ENCODE measurements at regions of chr15 and their contacts with region 1.

Region 1: DNA sequence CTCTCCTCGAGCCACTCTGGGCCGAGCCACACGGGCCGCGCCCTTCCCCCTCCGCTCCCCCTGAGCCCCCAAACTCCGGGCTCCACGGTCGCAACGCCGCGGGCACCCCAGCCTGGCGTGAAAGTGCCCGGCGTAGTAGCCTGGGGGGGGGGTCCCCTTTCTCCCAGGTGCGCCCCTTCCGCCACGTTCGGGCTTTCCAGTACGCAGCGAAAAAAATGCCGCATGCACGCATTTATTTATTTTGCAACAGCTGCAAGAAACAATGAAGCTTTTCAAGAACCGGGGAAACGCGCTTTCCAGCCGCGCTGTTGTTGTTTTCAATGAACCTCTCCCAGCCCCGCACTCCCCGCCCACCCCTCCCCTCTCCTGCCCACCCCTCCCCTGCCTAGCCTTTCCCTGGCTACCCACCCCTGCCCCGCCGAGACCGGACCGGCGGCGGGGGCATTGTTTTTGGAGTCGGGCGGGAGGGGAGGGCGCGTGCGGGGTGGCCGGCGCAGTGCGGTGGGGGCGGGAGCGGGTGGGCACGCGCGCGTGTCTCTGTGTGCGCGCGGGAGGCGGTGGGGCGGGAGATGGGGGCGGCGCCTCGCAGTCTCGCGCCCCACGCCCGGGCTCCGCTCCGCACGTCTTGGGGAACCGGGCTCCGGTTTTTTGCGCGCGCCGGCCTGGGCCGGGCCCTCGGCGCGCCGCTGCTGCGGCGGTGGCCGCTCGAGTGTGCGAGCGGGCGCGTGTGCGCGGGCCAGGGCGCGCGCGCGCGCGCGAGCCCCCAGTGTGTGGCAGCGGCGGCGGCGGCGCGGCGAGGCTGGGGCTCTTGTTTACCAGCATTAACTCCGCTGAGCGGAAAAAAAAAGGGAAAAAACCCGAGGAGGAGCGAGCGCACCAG is at the start of gene IGF1R:
- DNase-seq: peak; percentile 94
- ATAC-seq: peak; percentile 80
- H3K4me3 ChIP-seq: peak within 1 kb of the TSS; percentile 42 to 81 (median 78)
- H3K4me3 Mint-ChIP-seq: peak within 1 kb of the TSS; percentile 87
- H3K27ac ChIP-seq: peak within 1 kb of the TSS; percentile 49
- H3K27ac Mint-ChIP-seq: peak within 1 kb of the TSS; percentile 92
- H3K4me1 ChIP-seq: peaks cover 23 to 31% of the 10 kb centered on the region in 2 donors
- H3K4me1 Mint-ChIP-seq: peaks cover 23% of the 10 kb centered on the region
- H3K27me3 ChIP-seq: peaks cover 0 to 23% (median 7%) of the 10 kb centered on the region in 4 experiments
- H3K27me3 Mint-ChIP-seq: peaks cover 32% of the 10 kb centered on the region
- CTCF ChIP-seq: peak; percentile 29
- total RNA-seq, gene IGF1R: 23.1 and 27.3 TPM in 2 replicates

Region 2: DNA sequence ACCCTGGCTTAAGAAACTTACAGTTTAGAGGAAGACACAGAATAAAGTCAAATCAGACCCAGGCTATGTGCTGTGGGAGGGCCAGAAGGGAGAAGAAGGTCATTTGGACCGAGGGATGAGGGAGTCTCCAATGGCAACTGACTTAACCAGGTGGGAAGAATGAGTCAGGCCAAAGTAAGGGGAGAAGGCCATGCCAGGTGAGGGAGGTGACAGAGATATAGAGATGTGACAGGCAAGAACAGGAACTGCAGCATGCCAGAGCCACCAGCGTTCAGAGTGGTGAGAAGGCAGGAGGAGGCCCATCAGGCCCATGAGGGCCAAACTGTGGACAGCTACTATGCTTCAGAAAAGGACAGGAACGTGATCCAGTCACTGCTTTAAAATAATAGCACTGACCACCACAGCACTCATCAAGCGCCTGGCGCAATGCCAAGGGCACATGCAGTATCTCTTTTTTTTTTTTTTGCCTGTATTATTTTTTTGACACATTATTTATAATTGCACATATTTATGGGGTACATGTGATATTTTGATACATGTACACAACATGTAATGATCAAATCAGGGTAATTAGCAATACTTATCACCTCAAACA is 154.0 kb before region 1 on chr15:
- CTCF ChIA-PET with region 1: no interaction called
- POLR2A ChIA-PET with region 1: no interaction called
- intact Hi-C with region 1: no loop called
- DNase-seq: no peak
- ATAC-seq: no peak
- H3K4me3 ChIP-seq: no peak overlapping the region
- H3K4me3 Mint-ChIP-seq: no peak overlapping the region
- H3K27ac ChIP-seq: no peak overlapping the region
- H3K27ac Mint-ChIP-seq: no peak overlapping the region
- H3K4me1 ChIP-seq: no peaks in the 10 kb centered on the region
- H3K4me1 Mint-ChIP-seq: no peaks in the 10 kb centered on the region
- H3K27me3 ChIP-seq: no peaks in the 10 kb centered on the region
- H3K27me3 Mint-ChIP-seq: no peaks in the 10 kb centered on the region
- CTCF ChIP-seq: no peak

Region 3: DNA sequence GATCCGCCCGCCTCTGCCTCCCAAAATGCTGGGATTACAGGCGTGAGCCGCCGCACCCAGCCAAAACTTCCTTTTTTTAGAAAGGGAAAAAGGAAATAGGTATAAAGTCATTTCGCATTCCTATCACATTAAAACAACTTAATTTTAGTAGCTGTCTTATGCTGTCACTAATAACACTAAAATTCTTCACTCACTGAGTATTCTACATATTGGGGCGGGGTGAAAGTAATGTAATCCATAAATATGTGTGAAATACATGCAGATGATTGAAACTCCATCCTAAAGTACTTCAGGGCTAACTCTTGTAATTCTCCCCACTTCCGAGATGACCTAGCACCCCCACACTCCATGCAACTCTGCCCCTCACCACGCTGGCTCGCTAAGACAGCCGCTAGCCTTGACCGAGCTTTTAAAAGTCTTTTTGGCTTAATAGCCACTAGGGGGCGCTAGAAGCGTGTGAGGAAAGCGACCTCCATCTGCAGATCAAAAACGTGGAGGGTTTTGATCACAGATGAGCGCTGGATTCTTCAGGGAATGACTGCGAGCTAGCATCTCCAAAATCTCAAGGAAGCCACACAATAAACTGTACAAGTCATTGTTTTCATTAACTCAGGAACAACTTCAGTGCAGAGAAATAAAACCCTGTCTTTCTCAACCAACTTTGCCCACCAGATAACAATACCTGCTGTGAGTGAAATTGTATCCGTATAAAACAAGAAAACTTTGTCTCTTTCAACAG is 129.0 kb before region 1 on chr15:
- CTCF ChIA-PET with region 1: interaction called, 19 read pairs
- POLR2A ChIA-PET with region 1: no interaction called
- intact Hi-C with region 1: no loop called
- DNase-seq: peak; percentile 80
- ATAC-seq: peak; percentile 63
- H3K4me3 ChIP-seq: no peak overlapping the region
- H3K4me3 Mint-ChIP-seq: no peak overlapping the region
- H3K27ac ChIP-seq: no peak overlapping the region
- H3K27ac Mint-ChIP-seq: no peak overlapping the region
- H3K4me1 ChIP-seq: peaks cover 0 to 3% of the 10 kb centered on the region in 2 donors
- H3K4me1 Mint-ChIP-seq: peaks cover 2% of the 10 kb centered on the region
- H3K27me3 ChIP-seq: no peaks in the 10 kb centered on the region
- H3K27me3 Mint-ChIP-seq: peaks cover 10% of the 10 kb centered on the region
- CTCF ChIP-seq: peak; percentile 81

Region 4: GRCh38 chr15:98658831-98659699 is 11.1 kb after region 1 on chr15:
- CTCF ChIA-PET with region 1: interaction called, 31 read pairs
- POLR2A ChIA-PET with region 1: no interaction called
- intact Hi-C with region 1: no loop called
- DNase-seq: peak; percentile 70
- ATAC-seq: peak; percentile 58
- H3K4me3 ChIP-seq: no peak overlapping the region
- H3K4me3 Mint-ChIP-seq: no peak overlapping the region
- H3K27ac ChIP-seq: no peak overlapping the region
- H3K27ac Mint-ChIP-seq: no peak overlapping the region
- H3K4me1 ChIP-seq: no peaks in the 10 kb centered on the region
- H3K4me1 Mint-ChIP-seq: no peaks in the 10 kb centered on the region
- H3K27me3 ChIP-seq: no peaks in the 10 kb centered on the region
- H3K27me3 Mint-ChIP-seq: peaks cover 31% of the 10 kb centered on the region
- CTCF ChIP-seq: peak; percentile 97

Region 5: GRCh38 chr15:98727115-98728085 is 79.4 kb after region 1 on chr15:
- CTCF ChIA-PET with region 1: no interaction called
- POLR2A ChIA-PET with region 1: no interaction called
- intact Hi-C with region 1: no loop called
- DNase-seq: no peak
- ATAC-seq: no peak
- H3K4me3 ChIP-seq: no peak overlapping the region
- H3K4me3 Mint-ChIP-seq: no peak overlapping the region
- H3K27ac ChIP-seq: no peak overlapping the region
- H3K27ac Mint-ChIP-seq: no peak overlapping the region
- H3K4me1 ChIP-seq: no peaks in the 10 kb centered on the region
- H3K4me1 Mint-ChIP-seq: no peaks in the 10 kb centered on the region
- H3K27me3 ChIP-seq: no peaks in the 10 kb centered on the region
- H3K27me3 Mint-ChIP-seq: no peaks in the 10 kb centered on the region
- CTCF ChIP-seq: no peak

Region 6: GRCh38 chr15:98865397-98866339 is 217.7 kb after region 1 on chr15:
- CTCF ChIA-PET with region 1: no interaction called
- POLR2A ChIA-PET with region 1: no interaction called
- intact Hi-C with region 1: loop called (anchors 1 kb)
- DNase-seq: peak; percentile 83
- ATAC-seq: peak; percentile 94
- H3K4me3 ChIP-seq: peak overlapping the region; percentile 50 to 63 (median 57)
- H3K4me3 Mint-ChIP-seq: peak overlapping the region; percentile 86
- H3K27ac ChIP-seq: peak overlapping the region; percentile 68 to 75
- H3K27ac Mint-ChIP-seq: peak overlapping the region; percentile 93
- H3K4me1 ChIP-seq: peaks cover 8 to 14% of the 10 kb centered on the region in 2 donors
- H3K4me1 Mint-ChIP-seq: peaks cover 15% of the 10 kb centered on the region
- H3K27me3 ChIP-seq: no peaks in the 10 kb centered on the region
- H3K27me3 Mint-ChIP-seq: peaks cover 5% of the 10 kb centered on the region
- CTCF ChIP-seq: no peak

Region 7: DNA sequence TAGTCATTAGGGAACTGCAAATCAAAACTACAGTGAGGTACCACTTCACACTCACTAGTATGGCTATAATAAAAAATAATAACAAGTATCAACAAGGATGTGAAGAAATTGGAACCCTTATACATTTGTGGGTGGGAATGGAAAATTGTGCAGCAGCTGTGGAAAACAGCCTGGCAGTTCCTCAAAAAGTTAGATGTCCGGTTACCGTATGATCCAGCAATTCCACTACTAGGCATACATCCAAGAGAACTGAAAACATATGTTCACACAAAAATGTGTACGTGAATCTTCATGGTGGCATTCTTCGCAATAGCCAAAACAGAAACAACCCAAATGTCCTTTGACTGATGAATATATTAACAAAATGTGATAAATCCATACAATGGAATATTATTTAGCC is 1273.1 kb after region 1 on chr15:
- CTCF ChIA-PET with region 1: no interaction called
- POLR2A ChIA-PET with region 1: no interaction called
- intact Hi-C with region 1: loop called (anchors 5 kb)
- DNase-seq: no peak
- ATAC-seq: no peak
- H3K4me3 ChIP-seq: no peak overlapping the region
- H3K4me3 Mint-ChIP-seq: no peak overlapping the region
- H3K27ac ChIP-seq: no peak overlapping the region
- H3K27ac Mint-ChIP-seq: no peak overlapping the region
- H3K4me1 ChIP-seq: peaks cover 4 to 7% of the 10 kb centered on the region in 2 donors
- H3K4me1 Mint-ChIP-seq: peaks cover 5% of the 10 kb centered on the region
- H3K27me3 ChIP-seq: peaks cover 0 to 11% (median 0%) of the 10 kb centered on the region in 4 experiments
- H3K27me3 Mint-ChIP-seq: peaks cover 20% of the 10 kb centered on the region
- CTCF ChIP-seq: no peak